ENCODE measurements at regions of chr9 and their contacts with region 1.

Region 1: GRCh38 chr9:9605681-9606080 is 1007.1 kb downstream of the PTPRD start:
- DNase-seq: no peak
- ATAC-seq: no peak
- H3K4me3 ChIP-seq: no peak overlapping the region
- H3K4me3 Mint-ChIP-seq: no peak overlapping the region
- H3K27ac ChIP-seq: no peak overlapping the region
- H3K27ac Mint-ChIP-seq: no peak overlapping the region
- H3K4me1 ChIP-seq: peaks cover 0 to 4% of the 10 kb centered on the region in 2 donors
- H3K4me1 Mint-ChIP-seq: peaks cover 2% of the 10 kb centered on the region
- H3K27me3 ChIP-seq: no peaks in the 10 kb centered on the region
- H3K27me3 Mint-ChIP-seq: no peaks in the 10 kb centered on the region
- CTCF ChIP-seq: no peak

Region 2: DNA sequence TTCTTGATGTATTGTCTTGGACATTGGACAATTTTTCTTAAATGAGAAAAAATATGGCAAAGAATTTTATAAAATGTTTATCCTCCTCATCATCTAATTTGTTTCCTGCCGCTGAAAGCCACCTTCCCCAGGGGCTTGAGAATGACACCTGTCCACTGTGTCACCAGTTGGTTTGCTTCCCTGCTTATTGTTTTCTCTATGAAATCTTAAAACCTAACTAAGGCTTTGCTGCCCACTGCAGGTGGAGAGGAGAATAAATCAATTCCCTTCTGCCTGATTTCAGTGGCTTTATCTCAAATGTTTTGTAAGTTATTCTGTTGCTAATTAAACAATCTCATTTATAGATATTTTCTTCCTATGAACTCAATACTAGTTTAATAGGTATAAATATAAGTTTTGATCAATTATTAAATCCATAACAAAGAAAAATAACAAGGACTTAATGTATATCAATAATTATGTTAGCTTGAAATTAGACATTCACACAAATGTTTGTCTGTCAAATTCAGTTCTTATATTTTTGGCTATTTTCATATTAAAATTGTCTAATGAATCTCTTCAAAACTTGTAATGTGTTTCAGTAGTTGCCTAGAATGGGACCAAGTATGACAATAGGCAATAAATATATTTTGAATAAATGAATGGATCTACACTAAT is 184.7 kb after region 1 on chr9:
- CTCF ChIA-PET with region 1: interaction called, 55 read pairs
- POLR2A ChIA-PET with region 1: no interaction called
- intact Hi-C with region 1: loop called (anchors 1 kb)
- DNase-seq: peak; percentile 44
- ATAC-seq: peak; percentile 24
- H3K4me3 ChIP-seq: no peak overlapping the region
- H3K4me3 Mint-ChIP-seq: no peak overlapping the region
- H3K27ac ChIP-seq: no peak overlapping the region
- H3K27ac Mint-ChIP-seq: no peak overlapping the region
- H3K4me1 ChIP-seq: peaks cover 0 to 6% of the 10 kb centered on the region in 2 donors
- H3K4me1 Mint-ChIP-seq: peaks cover 4% of the 10 kb centered on the region
- H3K27me3 ChIP-seq: no peaks in the 10 kb centered on the region
- H3K27me3 Mint-ChIP-seq: no peaks in the 10 kb centered on the region
- CTCF ChIP-seq: peak; percentile 78

Measured in B cell (primary cell).